Right ventricle myocardium inferior (tissue), 1 donor: ENCODE measurements at regions of chr2 and their contacts with region 1.

Region 1: DNA sequence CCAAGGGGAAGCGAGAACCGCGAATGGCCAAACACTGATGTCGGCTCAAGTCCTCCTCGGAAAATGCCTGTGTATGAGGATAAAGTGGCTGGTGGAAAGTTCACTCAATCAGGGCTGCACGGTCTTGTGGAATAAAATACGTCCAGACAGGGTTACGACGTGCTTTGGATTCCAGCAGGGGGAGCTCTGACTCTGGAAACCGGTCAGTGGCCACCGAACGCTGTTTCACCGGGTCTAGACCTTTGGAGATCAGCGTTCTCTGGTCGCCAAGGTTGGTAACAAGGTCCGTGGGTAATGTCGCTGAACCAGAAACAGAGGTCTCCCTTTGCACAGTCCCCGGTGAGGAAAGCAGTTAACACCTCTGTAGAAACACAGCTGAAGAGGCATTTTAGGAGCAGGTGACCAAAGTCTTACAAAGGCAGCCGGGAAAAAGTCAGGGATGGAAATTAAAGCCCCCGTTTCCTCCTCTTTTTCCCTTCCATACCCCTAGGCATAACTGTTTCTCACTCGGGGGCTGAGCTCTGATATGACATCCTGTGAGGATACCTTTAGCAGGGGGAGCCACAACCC is 47.8 kb downstream of the CDCA7 start:
- DNase-seq: peak; percentile 79
- ATAC-seq: peak; percentile 93

Region 2: DNA sequence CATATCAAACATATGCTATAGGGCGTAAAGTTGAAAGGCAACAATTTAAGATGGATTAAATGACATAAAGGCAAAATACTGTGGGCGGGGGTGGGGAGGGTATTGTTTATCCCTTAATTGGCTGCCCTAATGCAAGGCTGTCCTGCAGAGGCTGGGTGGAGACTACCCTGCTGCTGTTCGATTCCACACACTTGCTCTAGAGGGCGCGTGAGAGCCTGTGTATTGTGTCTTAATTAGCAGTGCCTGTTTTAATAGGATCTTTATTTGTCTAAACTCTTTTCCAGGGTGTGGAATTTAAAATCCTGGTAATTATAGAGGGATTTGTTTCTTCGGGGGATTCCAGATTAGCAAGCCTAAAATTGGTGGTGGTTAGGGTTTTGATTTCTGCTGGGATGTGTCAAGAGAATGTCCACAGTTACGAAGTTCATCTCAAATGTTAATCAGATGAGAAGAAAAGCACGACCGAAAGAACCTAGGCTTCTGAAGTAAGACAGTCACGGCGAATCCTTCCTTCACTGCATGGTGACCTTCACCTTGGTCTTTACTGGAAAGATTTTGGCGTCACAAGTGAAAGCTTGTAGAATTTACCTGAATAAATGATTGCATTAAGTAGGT is 430.4 kb before region 1 on chr2:
- intact Hi-C with region 1: loop called (anchors 10 kb)
- DNase-seq: no peak
- ATAC-seq: peak; percentile 45

Region 3: GRCh38 chr2:173343906-173344305 is 58.6 kb before region 1 on chr2:
- intact Hi-C with region 1: no loop called
- DNase-seq: no peak
- ATAC-seq: no peak

Region 4: GRCh38 chr2:173448938-173449471 is 46.5 kb after region 1 on chr2:
- intact Hi-C with region 1: loop called (anchors 1 kb)
- DNase-seq: peak; percentile 81
- ATAC-seq: peak; percentile 94

Region 5: DNA sequence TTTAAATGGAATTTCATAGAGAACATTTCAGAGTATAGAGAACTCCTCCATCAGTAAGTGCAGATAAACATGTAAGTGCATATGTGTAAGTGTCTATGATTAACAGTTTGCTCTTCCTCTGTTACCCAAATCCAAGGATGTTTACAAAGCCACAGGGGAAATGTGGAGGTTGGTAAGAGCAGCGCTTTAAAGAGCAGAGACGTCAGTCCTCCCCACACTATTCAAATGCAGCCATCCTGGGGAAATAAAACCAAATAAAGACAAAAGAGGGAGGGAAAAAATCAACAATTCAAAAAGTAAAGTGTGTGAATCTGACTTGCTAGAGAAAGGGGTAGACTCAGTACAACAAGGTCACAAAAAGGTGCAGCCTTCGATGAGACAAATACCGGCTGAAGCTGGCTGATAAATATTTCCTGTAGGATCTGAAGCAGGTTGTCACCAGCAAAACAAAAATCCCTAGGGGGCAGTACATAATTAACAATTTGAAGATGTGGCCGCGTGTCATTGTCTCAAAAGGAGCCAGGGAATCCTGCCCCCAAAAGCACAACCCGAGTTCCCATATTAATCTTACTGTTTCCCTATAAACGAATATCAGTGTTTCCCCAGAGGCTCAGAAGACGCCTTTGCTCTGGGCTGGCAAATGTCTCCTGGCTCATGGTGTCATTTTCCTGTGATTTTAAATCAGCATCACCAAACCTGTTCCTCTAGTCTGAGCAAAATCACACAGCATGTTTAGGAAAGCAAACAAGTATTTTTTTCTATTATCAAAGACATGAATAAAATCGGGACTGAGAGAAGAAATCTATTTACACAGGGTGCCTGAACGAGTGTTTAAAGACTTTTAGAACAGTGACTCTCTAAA is 168.8 kb after region 1 on chr2:
- intact Hi-C with region 1: loop called (anchors 5 kb)
- DNase-seq: no peak
- ATAC-seq: no peak

Region 6: GRCh38 chr2:173752152-173752551 is 349.7 kb after region 1 on chr2:
- intact Hi-C with region 1: loop called (anchors 10 kb)
- DNase-seq: no peak
- ATAC-seq: no peak

Region 7: DNA sequence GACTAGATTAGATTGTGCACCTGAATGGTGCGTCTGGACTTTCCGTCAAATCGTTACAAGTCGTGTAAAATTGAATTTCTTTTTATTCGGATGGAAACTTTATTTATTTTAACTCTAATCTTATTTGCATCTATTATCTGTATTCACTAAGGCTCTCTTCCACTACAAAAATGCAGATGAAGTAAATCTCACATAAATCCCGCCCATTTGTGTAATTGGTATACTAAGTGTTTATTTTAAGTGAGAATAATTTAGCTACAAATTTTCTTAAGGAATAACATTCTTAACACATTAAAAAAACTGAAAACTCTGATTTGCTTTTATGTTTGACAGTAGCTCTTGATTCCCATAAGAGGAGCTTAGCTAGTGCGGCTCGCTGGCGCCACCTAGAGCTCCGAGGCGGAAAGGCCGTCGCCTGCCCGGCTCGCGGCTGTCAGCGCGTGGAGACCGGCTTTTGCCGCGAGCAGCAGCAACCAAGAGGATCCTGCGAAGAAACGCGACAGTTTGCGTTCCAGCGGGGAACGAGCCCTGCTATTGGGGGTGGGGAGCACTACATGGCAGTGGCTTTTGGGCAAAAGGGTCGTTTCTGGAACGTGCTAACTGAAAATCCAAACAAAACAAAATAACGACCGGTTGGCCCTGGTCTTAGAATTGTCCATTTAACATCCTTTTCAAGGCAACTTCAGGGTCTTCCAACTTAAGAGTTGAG is 939.0 kb after region 1 on chr2:
- intact Hi-C with region 1: loop called (anchors 5 kb)
- DNase-seq: peak; percentile 95
- ATAC-seq: peak; percentile 85